ENCODE measurements at regions of chr1 and their contacts with region 1.

Region 1: DNA sequence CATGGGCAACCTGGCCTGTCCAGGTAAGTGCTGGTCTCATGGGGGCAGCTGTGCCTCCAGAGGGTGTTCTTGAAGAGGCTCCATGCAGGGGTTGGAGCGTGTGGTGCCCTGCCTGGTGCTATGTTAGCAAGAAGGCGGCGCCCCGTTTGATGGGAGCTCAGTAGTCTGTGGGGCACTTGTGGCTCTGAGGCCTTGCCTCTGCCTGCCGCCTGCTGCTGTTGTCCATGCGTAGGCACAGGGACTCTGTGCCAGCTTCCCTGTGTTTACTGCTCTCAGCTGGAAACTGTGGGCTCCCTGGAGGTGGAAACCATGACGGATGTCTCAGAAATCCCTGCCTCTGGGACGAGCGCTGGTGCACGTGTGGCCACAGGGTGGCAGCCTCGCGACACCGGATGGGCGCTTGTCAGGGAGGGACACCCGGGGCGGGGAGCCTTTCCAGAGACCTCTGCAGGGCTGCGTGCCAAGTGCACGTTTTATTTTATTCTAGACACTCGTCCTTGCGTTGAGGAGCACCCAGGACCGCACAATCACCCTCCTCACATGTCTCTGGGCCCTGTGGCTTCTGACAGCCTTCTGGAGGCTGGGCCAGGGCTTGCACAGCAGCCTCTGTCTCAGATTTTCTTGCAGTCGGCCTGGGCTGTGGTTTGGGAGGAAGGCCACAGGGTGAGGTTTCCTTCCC is 27.1 kb downstream of the SNAP47 start:
- DNase-seq: peak; percentile 92
- H3K4me3 Mint-ChIP-seq: peak overlapping the region; percentile 23
- H3K27ac Mint-ChIP-seq: peak overlapping the region; percentile 56
- H3K4me1 Mint-ChIP-seq: peaks cover 98% of the 10 kb centered on the region
- H3K27me3 Mint-ChIP-seq: no peaks in the 10 kb centered on the region

Region 2: GRCh38 chr1:227563324-227564201 is 198.8 kb before region 1 on chr1 and contains the start of gene ZNF678:
- CTCF ChIA-PET with region 1: interaction called, 3 read pairs
- POLR2A ChIA-PET with region 1: no interaction called
- intact Hi-C with region 1: loop called (anchors 10 kb)
- DNase-seq: peak; percentile 95
- H3K4me3 Mint-ChIP-seq: peak within 1 kb of the TSS; percentile 96
- H3K27ac Mint-ChIP-seq: peak within 1 kb of the TSS; percentile 92
- H3K4me1 Mint-ChIP-seq: peaks cover 28% of the 10 kb centered on the region
- H3K27me3 Mint-ChIP-seq: peaks cover 22% of the 10 kb centered on the region
- total RNA-seq, gene ZNF678: 6.5 to 7.4 TPM

Region 3: DNA sequence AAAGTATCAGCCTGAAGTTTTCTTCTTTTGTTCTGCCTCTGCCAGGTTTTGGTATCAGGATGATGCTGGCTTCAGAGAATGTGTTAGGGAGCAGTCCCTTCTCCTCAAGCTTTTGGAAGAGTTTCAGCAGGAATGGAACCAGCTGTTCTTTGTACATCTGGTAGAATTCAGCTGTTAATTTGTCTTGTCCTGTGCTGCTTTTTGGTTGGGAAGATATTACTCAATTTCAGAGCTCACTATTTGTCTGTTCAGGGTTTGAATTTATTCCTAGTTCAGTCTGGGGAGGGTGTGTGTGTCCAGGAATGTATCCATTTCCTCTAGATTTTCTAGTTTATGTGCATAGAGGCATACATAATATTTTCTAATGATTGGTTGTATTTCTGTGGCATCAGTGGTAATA is 186.2 kb before region 1 on chr1:
- CTCF ChIA-PET with region 1: no interaction called
- POLR2A ChIA-PET with region 1: no interaction called
- intact Hi-C with region 1: no loop called
- DNase-seq: no peak
- H3K4me3 Mint-ChIP-seq: no peak overlapping the region
- H3K27ac Mint-ChIP-seq: no peak overlapping the region
- H3K4me1 Mint-ChIP-seq: peaks cover 8% of the 10 kb centered on the region
- H3K27me3 Mint-ChIP-seq: no peaks in the 10 kb centered on the region

Region 4: GRCh38 chr1:227734856-227735538 is 27.4 kb before region 1 on chr1 and contains the starts of genes JMJD4 and SNAP47:
- CTCF ChIA-PET with region 1: interaction called, 14 read pairs
- POLR2A ChIA-PET with region 1: interaction called, 4 read pairs
- intact Hi-C with region 1: loop called (anchors 2 kb)
- DNase-seq: peak; percentile 95
- H3K4me3 Mint-ChIP-seq: peak within 1 kb of the TSS; percentile 94
- H3K27ac Mint-ChIP-seq: peak within 1 kb of the TSS; percentile 79
- H3K4me1 Mint-ChIP-seq: peaks cover 40% of the 10 kb centered on the region
- H3K27me3 Mint-ChIP-seq: no peaks in the 10 kb centered on the region
- total RNA-seq, gene JMJD4: 15.2 to 16.1 TPM
- total RNA-seq, gene SNAP47: 30.9 to 32.5 TPM

Region 5: DNA sequence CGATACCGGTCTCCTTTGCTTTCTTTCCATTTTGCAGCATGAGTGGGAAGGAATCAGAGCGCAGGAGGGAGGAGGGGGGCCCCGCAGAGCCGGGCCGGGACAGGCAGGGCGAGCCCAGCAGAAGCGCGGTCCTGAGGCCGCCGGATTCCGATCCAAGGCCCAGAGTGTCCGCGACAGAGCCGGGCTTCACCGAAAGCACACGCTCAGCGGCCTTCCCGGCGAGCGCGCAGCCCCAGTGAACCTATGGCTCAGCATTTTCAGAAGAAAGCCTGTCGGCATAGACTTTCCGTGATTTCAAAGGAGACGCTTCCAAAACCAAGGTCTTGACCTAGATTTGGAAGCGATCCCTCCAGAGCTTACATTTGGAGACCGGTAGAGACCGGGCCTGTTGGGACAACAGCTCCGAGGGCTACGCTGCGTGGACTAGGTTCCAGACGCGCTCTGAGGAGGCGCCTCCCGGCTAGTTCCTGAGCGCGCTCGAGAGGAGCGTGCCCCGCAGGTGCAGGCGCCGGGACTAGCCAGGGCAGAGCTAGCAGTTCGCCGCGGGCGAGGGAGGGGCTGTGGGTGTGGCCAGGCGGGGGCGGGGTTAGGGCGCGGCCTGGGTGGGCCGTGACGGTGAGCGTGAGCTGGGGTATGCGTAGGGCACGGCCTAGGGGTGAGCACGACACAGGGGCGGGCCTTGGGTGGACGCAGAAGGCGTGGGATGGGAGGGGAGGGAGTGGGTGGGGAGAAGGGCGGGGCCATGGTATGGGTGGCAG is 25.3 kb after region 1 on chr1:
- CTCF ChIA-PET with region 1: interaction called, 17 read pairs
- POLR2A ChIA-PET with region 1: no interaction called
- intact Hi-C with region 1: loop called (anchors 1 kb)
- DNase-seq: peak; percentile 97
- H3K4me3 Mint-ChIP-seq: peak overlapping the region; percentile 68
- H3K27ac Mint-ChIP-seq: no peak overlapping the region
- H3K4me1 Mint-ChIP-seq: peaks cover 11% of the 10 kb centered on the region
- H3K27me3 Mint-ChIP-seq: no peaks in the 10 kb centered on the region

Region 6: DNA sequence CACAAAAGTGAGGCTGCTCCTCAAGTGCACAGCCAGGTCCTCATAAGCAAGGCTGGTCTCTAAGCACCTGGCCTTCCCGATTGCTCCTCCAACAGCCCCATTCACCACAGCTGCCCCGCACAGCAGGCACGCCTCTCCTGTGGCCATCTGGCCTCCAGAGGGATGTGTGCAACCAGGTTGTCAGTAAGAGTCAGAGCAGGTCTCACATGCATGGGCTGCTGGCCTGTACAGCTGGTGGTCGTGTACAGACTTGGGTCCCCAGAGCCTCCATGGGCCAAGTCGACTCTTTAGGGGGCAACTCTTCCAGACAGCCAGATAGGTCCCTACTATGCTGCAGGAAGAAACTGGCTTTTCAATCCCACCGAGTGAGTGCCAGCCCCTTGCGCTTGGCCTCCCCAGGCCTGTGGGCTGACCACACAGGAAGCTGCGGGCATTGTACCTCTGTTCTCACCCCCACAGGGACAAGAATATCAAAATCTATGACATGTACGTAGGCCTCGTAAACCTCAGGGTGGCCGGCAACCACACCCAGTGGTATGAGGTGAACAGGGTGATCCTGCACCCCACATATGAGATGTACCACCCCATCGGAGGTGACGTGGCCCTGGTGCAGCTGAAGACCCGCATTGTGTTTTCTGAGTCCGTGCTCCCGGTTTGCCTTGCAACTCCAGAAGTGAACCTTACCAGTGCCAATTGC is 54.5 kb after region 1 on chr1:
- CTCF ChIA-PET with region 1: no interaction called
- POLR2A ChIA-PET with region 1: no interaction called
- intact Hi-C with region 1: no loop called
- DNase-seq: no peak
- H3K4me3 Mint-ChIP-seq: no peak overlapping the region
- H3K27ac Mint-ChIP-seq: no peak overlapping the region
- H3K4me1 Mint-ChIP-seq: no peaks in the 10 kb centered on the region
- H3K27me3 Mint-ChIP-seq: no peaks in the 10 kb centered on the region

Region 7: GRCh38 chr1:227934476-227935313 is 172.3 kb after region 1 on chr1:
- CTCF ChIA-PET with region 1: interaction called, 4 read pairs
- POLR2A ChIA-PET with region 1: interaction called, 3 read pairs
- intact Hi-C with region 1: loop called (anchors 1 kb)
- DNase-seq: peak; percentile 83
- H3K4me3 Mint-ChIP-seq: no peak overlapping the region
- H3K27ac Mint-ChIP-seq: peak overlapping the region; percentile 71
- H3K4me1 Mint-ChIP-seq: peaks cover 20% of the 10 kb centered on the region
- H3K27me3 Mint-ChIP-seq: no peaks in the 10 kb centered on the region

Region 8: GRCh38 chr1:227954163-227954850 is 191.9 kb after region 1 on chr1:
- CTCF ChIA-PET with region 1: interaction called, 106 read pairs
- POLR2A ChIA-PET with region 1: no interaction called
- intact Hi-C with region 1: no loop called
- DNase-seq: no peak
- H3K4me3 Mint-ChIP-seq: no peak overlapping the region
- H3K27ac Mint-ChIP-seq: no peak overlapping the region
- H3K4me1 Mint-ChIP-seq: peaks cover 5% of the 10 kb centered on the region
- H3K27me3 Mint-ChIP-seq: peaks cover 22% of the 10 kb centered on the region